ENCODE measurements at regions of chr16 and their contacts with region 1.

Region 1: DNA sequence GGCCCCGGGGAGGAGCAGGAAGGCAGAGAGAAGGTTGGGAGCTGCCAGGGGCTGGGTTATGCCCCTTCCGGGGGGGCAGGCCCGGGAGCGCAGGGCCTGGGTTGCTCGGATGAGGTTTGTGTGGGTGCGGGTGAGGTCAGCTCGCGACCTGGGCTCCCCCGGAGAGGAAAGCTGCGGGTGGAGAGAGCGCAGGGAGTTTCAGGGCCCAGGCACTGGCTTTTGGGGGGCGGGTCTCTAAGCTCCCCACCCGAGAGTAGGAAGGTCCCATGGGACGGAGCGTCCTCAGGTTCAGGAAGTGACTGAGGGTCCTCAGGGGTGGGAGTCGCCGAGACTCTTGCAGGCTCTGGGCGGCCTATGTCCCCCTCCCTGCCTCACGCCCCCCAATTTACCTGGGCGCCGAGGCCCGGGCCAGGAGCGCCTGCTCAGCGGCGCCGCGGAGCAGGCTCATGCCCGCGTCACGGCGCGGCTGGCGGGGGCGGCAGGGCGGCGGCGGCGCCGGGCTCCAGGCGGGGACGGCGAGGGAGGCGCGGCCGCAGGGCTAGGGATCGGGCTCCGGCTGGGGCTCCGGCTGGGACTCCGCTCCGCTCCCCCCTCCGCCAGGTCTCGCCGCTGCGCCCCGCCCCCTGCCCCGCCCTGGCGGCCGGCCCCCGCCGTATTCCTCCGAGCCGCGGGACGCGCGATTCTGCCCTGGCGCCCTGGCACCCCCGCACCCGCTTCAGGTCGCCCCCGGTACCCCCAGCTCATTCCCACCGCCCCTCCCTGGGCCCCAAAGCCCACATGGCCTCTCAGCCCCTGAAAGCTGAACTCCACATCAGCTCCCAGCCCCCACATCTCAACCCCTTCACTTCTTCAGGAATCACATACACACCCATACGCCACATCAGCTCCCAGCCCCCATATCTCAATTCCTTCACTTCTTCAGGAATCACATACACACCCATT is at the start of gene DOK4:
- DNase-seq: no peak
- ATAC-seq: peak; percentile 93
- H3K4me3 ChIP-seq: peak within 1 kb of the TSS; percentile 60; the same call in 1 of the 2 replicates
- H3K27ac ChIP-seq: no peak within 1 kb of the TSS
- H3K4me1 ChIP-seq: peaks cover 15% of the 10 kb centered on the region
- H3K27me3 ChIP-seq: peaks cover 0 to 2% of the 10 kb centered on the region in 2 experiments; a peak in 1 of 4 replicates
- CTCF ChIP-seq: no peak
- EP300 ChIP-seq: no peak
- POLR2A ChIP-seq: no peak
- RAD21 ChIP-seq: no peak
- polyA plus RNA-seq, gene DOK4: 0.20 TPM in 1 of 2 experiments, not detected in the other

Region 2: GRCh38 chr16:57462209-57462977 is 23.8 kb before region 1 on chr16 and contains the start of gene POLR2C:
- CTCF ChIA-PET with region 1: interaction called, 10 read pairs
- POLR2A ChIA-PET with region 1: interaction called, 3 read pairs
- RAD21 ChIA-PET with region 1: interaction called, 3 read pairs
- SMC1A ChIA-PET with region 1: no interaction called
- in situ Hi-C with region 1: no loop called
- intact Hi-C with region 1: no loop called
- DNase-seq: peak; percentile 37
- ATAC-seq: peak; percentile 98
- H3K4me3 ChIP-seq: peak within 1 kb of the TSS; percentile 98
- H3K27ac ChIP-seq: peak within 1 kb of the TSS; percentile 64
- H3K4me1 ChIP-seq: peaks cover 7% of the 10 kb centered on the region
- H3K27me3 ChIP-seq: no peaks in the 10 kb centered on the region
- CTCF ChIP-seq: peak; percentile 96 to 99 (median 96); a peak in 5 of 6 replicates
- EP300 ChIP-seq: no peak
- POLR2A ChIP-seq: peak; percentile 100
- RAD21 ChIP-seq: peak; percentile 36
- polyA plus RNA-seq, gene POLR2C: 26.9 to 40.2 TPM

Region 3: GRCh38 chr16:57475711-57476339 is 10.4 kb before region 1 on chr16:
- CTCF ChIA-PET with region 1: interaction called, 7 read pairs
- POLR2A ChIA-PET with region 1: no interaction called
- RAD21 ChIA-PET with region 1: interaction called, 3 read pairs
- SMC1A ChIA-PET with region 1: interaction called, 11 read pairs
- in situ Hi-C with region 1: no loop called
- intact Hi-C with region 1: no loop called
- DNase-seq: no peak
- ATAC-seq: peak; percentile 96
- H3K4me3 ChIP-seq: no peak overlapping the region
- H3K27ac ChIP-seq: no peak overlapping the region
- H3K4me1 ChIP-seq: peaks cover 16% of the 10 kb centered on the region
- H3K27me3 ChIP-seq: no peaks in the 10 kb centered on the region
- CTCF ChIP-seq: peak; percentile 43 to 75 (median 73)
- EP300 ChIP-seq: no peak
- POLR2A ChIP-seq: no peak
- RAD21 ChIP-seq: peak; percentile 54

Region 4: DNA sequence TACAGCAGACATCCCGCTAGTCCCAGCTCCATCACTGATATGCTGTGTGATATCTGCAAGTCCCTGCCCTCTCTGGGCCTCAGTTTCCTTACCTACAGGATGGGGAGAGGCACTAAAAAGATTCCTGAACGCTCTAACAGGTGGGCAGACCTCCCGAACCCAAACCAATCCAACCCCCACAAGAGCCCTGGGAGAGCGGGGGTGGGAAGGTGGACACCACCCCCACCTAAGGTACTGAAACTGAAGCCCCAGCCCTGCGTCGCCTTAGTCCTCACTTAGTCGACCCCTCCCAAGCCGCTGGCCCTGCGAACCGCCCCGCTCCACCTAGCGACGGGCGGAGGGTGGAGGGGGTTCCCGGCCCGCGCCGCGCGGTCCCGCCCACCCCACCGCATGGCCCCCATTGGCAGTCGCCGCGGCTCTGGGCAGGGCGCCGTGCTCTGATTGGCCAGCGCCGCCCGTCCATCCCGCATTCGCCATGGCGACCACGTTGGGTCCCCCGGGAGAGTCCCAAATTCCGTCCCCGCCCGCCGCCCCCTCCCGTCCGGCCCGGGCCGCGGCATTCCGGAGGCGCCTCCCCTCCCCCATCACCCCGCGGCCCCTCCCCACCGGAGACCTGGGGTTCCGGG is 49.6 kb after region 1 on chr16:
- CTCF ChIA-PET with region 1: interaction called, 11 read pairs
- POLR2A ChIA-PET with region 1: interaction called, 10 read pairs
- RAD21 ChIA-PET with region 1: interaction called, 16 read pairs
- SMC1A ChIA-PET with region 1: interaction called, 17 read pairs
- in situ Hi-C with region 1: no loop called
- intact Hi-C with region 1: loop called (anchors 2 kb)
- DNase-seq: no peak
- ATAC-seq: peak; percentile 82
- H3K4me3 ChIP-seq: peak overlapping the region; percentile 88
- H3K27ac ChIP-seq: peak overlapping the region; percentile 85
- H3K4me1 ChIP-seq: peaks cover 63% of the 10 kb centered on the region
- H3K27me3 ChIP-seq: no peaks in the 10 kb centered on the region
- CTCF ChIP-seq: 0 out of 6 replicates have a peak, but pooled peaks of 2 of the 3 experiments have one; percentile 16 to 24
- EP300 ChIP-seq: no peak
- POLR2A ChIP-seq: no peak
- RAD21 ChIP-seq: no peak